Lower lobe of right lung (tissue), 2 donors: ENCODE measurements at regions of chr12 and their contacts with region 1.

Region 1: DNA sequence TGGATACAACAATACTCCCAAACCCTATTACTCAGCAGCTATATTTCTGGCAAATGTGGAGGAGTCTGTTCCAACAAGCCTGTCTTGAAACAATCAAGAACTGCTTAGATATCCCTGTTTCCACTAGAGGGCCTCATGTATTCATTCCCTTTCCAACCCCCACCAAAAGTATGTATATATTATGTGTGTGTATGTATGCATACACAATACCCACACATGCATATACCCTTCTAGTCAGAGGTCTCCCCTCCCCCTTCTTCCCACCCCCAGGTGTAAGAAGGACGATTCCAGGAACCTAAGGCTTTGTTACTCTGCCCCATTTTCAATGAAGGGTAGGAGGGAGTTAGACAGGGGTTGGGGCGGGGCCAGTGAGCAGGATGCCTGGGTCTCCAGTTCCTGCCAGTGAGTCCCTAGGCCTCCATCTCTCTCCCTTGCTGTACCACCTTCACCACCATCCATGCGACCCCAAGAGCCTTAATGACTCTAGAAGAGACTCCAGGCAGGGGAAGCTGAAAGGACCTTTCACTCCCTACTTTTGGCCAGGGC is at the start of gene DGKA:
- DNase-seq: peak; percentile 55
- ATAC-seq: no peak
- H3K4me3 ChIP-seq: peak within 1 kb of the TSS; percentile 75
- H3K27ac ChIP-seq: peak within 1 kb of the TSS; percentile 84
- H3K4me1 ChIP-seq: peaks cover 65% of the 10 kb centered on the region
- H3K27me3 ChIP-seq: no peaks in the 10 kb centered on the region
- CTCF ChIP-seq: peak; percentile 47
- total RNA-seq, gene DGKA: 35.3 TPM

Region 2: GRCh38 chr12:55743116-55743921 is 187.5 kb before region 1 on chr12 and contains the start of gene GDF11:
- intact Hi-C with region 1: loop called (anchors 10 kb)
- DNase-seq: peak; percentile 78
- ATAC-seq: peak; percentile 46 to 53
- H3K4me3 ChIP-seq: peak within 1 kb of the TSS; percentile 58
- H3K27ac ChIP-seq: peak within 1 kb of the TSS; percentile 21
- H3K4me1 ChIP-seq: peaks cover 17% of the 10 kb centered on the region
- H3K27me3 ChIP-seq: no peaks in the 10 kb centered on the region
- CTCF ChIP-seq: no peak
- total RNA-seq, gene GDF11: 3.8 TPM